ENCODE measurements at regions of chr17 and their contacts with region 1.

Region 1: DNA sequence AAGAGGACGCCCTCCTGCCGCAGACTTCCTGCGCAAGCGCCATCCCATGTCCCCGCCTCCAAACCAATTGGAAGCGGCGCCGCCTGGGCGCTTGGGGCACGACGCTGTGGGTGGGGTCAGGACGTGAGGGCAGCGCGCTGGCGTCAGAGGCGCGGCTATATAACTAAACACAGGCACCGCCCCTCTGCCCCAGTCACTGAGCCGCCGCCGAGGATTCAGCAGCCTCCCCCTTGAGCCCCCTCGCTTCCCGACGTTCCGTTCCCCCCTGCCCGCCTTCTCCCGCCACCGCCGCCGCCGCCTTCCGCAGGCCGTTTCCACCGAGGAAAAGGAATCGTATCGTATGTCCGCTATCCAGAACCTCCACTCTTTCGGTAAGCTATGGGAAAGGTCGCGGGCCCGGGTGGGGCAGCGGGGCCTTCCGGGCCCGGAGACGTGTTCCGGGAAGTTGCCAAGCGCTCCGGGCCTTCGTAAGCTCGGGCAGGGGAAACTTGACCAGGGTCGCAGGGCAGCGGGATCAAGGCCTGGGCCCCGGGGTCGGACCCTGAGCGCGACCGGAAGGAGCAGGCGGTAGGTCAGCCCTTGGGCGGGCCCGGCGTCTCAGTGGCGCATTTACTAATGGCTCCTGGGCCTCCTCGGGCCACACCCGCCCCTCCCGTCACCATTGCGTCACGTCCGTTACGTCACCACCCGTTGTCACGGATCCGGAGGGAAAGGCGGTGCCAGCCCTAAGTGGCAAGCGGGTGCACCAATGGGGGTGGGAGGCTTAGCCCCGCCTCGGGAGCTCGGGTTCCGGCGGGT is at the start of gene EIF1:
- DNase-seq: peak; percentile 98 to 100 (median 99)
- ATAC-seq: peak; percentile 85
- H3K4me3 ChIP-seq: peak within 1 kb of the TSS; percentile 86
- H3K4me3 Mint-ChIP-seq: peak within 1 kb of the TSS; percentile 90 to 99 (median 96)
- H3K27ac ChIP-seq: peak within 1 kb of the TSS; percentile 99
- H3K27ac Mint-ChIP-seq: peak within 1 kb of the TSS; percentile 98 to 99 (median 99)
- H3K4me1 ChIP-seq: peaks cover 22 to 25% of the 10 kb centered on the region in 2 donors
- H3K4me1 Mint-ChIP-seq: peaks cover 13 to 43% (median 35%) of the 10 kb centered on the region in 7 donors
- H3K27me3 ChIP-seq: no peaks in the 10 kb centered on the region
- H3K27me3 Mint-ChIP-seq: peaks cover 0 to 9% (median 0%) of the 10 kb centered on the region in 5 donors
- total RNA-seq, gene EIF1: 710 to 2,222 (median 934) TPM

Region 2: DNA sequence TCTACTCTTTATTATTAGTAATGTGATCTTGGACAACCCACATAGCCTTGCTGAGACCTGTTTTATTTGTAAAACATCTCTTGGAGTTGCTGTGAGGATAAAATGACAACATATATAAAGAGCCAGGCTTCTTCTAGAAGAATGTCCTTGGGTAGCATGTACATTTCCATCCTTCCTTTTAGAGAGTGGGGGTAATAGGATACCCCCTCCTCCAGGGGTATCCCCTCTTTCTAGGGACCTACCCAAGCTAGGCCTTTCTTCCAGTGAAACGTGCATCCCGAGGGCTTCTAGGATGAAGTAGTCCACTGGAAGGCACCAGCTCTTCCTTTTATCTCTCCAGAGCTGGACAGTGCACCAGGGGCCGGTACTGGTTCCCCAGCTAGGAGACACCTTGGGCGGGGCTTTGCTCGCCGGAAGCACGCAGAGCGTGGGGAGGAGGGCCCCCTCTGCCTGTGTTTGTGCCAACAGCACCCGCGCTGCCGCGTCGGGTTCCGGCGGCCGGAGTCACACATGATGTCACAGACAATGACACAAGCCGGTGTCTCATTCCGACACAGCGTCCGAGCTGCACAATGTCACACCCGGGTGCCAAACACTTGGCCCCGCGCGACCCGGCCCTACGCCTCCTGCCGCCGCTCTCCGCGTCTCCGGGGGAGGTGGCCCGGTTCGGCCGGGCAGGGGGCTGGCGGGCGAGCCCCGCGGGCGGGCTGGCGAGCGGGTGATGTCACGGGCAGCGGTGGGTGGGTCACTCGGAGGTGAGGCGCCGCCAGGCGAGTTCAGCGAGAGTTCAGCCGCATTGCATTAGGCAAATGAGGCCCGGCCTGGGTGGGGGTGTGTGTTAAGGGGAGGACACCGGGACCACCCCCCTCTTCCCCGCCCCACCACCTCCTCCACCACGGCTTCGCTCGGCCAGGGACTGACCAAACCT is 1347.8 kb before region 1 on chr17:
- CTCF ChIA-PET with region 1: no interaction called
- POLR2A ChIA-PET with region 1: no interaction called
- intact Hi-C with region 1: loop called in 1 of 2 experiments (anchors 5 kb)
- DNase-seq: peak; percentile 78 to 92 (median 85)
- ATAC-seq: peak; percentile 88
- H3K4me3 ChIP-seq: peak overlapping the region; percentile 73
- H3K4me3 Mint-ChIP-seq: peak overlapping the region; percentile 71 to 89 (median 82)
- H3K27ac ChIP-seq: peak overlapping the region; percentile 90
- H3K27ac Mint-ChIP-seq: peak overlapping the region; percentile 84 to 98 (median 96)
- H3K4me1 ChIP-seq: peaks cover 53 to 54% of the 10 kb centered on the region in 2 donors
- H3K4me1 Mint-ChIP-seq: peaks cover 46 to 80% (median 72%) of the 10 kb centered on the region in 7 donors
- H3K27me3 ChIP-seq: no peaks in the 10 kb centered on the region
- H3K27me3 Mint-ChIP-seq: no peaks in the 10 kb centered on the region

Region 3: DNA sequence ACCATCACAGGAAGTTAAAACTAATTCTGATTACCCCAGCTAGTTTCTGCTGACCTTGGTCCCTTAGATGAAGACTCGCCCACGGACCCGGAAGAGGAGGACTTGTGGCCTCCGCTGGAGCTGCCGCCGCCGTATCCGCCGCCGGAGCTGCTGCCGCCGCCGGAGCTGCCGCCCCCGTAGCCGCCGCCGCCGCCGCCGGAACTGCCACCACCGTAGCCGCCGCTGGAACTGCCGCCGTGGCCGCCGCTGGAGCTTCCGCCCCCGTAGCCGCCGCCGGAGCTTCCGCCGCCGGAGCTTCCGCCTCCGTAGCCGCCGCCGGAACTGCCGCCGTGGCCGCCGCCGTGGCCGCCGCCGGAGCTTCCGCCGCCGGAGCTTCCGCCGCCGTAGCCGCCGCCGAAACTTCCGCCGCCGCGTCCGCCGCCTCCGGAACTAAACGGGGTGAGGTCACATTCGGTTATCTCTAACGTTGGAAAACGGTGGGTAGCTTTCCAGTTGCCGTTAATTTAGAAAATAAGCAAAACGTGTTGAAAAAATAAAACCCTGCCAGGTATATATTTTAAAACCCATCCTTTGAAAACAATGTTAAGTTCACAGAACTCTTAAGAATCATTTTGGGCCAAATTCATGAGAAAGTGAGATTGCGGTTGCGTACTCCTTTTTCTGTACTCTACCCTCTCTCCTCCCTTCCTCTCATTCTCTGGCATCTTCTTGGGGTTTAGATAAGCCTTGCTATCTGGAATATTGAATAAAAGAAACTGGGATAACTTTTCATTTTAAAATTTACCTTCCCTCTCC is 870.0 kb before region 1 on chr17:
- CTCF ChIA-PET with region 1: no interaction called
- POLR2A ChIA-PET with region 1: interaction called, 41 read pairs
- intact Hi-C with region 1: loop called in 1 of 2 experiments (anchors 1 kb)
- DNase-seq: peak; percentile 74 to 89 (median 84)
- ATAC-seq: peak; percentile 92
- H3K4me3 ChIP-seq: peak overlapping the region; percentile 70
- H3K4me3 Mint-ChIP-seq: peak overlapping the region; percentile 84 to 98 (median 94)
- H3K27ac ChIP-seq: peak overlapping the region; percentile 76
- H3K27ac Mint-ChIP-seq: peak overlapping the region; percentile 93 to 99 (median 96)
- H3K4me1 ChIP-seq: peaks cover 9 to 13% of the 10 kb centered on the region in 2 donors
- H3K4me1 Mint-ChIP-seq: peaks cover 11 to 38% (median 31%) of the 10 kb centered on the region in 7 donors
- H3K27me3 ChIP-seq: no peaks in the 10 kb centered on the region
- H3K27me3 Mint-ChIP-seq: peaks cover 4 to 23% (median 16%) of the 10 kb centered on the region in 5 donors

Region 4: GRCh38 chr17:41811549-41812380 is 122.9 kb after region 1 on chr17 and contains the start of gene P3H4:
- CTCF ChIA-PET with region 1: no interaction called
- POLR2A ChIA-PET with region 1: interaction called, 5 read pairs
- intact Hi-C with region 1: loop called (anchors 1 to 2 kb)
- DNase-seq: peak; percentile 68 to 83 (median 79)
- ATAC-seq: peak; percentile 94
- H3K4me3 ChIP-seq: peak within 1 kb of the TSS; percentile 81
- H3K4me3 Mint-ChIP-seq: peak within 1 kb of the TSS; percentile 89 to 99 (median 94)
- H3K27ac ChIP-seq: peak within 1 kb of the TSS; percentile 48
- H3K27ac Mint-ChIP-seq: peak within 1 kb of the TSS in 7 of 9 donors; percentile 50 to 81 (median 68)
- H3K4me1 ChIP-seq: peaks cover 10 to 16% of the 10 kb centered on the region in 2 donors
- H3K4me1 Mint-ChIP-seq: peaks cover 14 to 26% (median 21%) of the 10 kb centered on the region in 7 donors
- H3K27me3 ChIP-seq: no peaks in the 10 kb centered on the region
- H3K27me3 Mint-ChIP-seq: peaks cover 0 to 22% (median 0%) of the 10 kb centered on the region in 5 donors
- total RNA-seq, gene P3H4: 3.6 to 7.0 (median 5.3) TPM

Region 5: GRCh38 chr17:43388359-43389045 is 1699.6 kb after region 1 on chr17:
- CTCF ChIA-PET with region 1: no interaction called
- POLR2A ChIA-PET with region 1: interaction called, 3 read pairs
- intact Hi-C with region 1: loop called in 1 of 2 experiments (anchors 5 kb)
- DNase-seq: peak; percentile 92 to 98 (median 95)
- ATAC-seq: peak; percentile 84
- H3K4me3 ChIP-seq: peak overlapping the region; percentile 94
- H3K4me3 Mint-ChIP-seq: peak overlapping the region; percentile 91 to 99 (median 96)
- H3K27ac ChIP-seq: peak overlapping the region; percentile 95
- H3K27ac Mint-ChIP-seq: peak overlapping the region; percentile 95 to 100 (median 98)
- H3K4me1 ChIP-seq: peaks cover 4 to 15% of the 10 kb centered on the region in 2 donors
- H3K4me1 Mint-ChIP-seq: peaks cover 16 to 39% (median 31%) of the 10 kb centered on the region in 7 donors
- H3K27me3 ChIP-seq: no peaks in the 10 kb centered on the region
- H3K27me3 Mint-ChIP-seq: no peaks in the 10 kb centered on the region

Measured in naive thymus-derived CD4-positive, alpha-beta T cell (primary cell).